ENCODE measurements at regions of chr9 and their contacts with region 1.

Region 1: GRCh38 chr9:104743376-104743985 is 4.0 kb upstream of the NIPSNAP3A start:
- DNase-seq: peak; percentile 75
- H3K4me3 ChIP-seq: no peak overlapping the region
- H3K27ac ChIP-seq: no peak overlapping the region
- H3K4me1 ChIP-seq: no peaks in the 10 kb centered on the region
- H3K27me3 ChIP-seq: no peaks in the 10 kb centered on the region
- CTCF ChIP-seq: peak; percentile 79

Region 2: GRCh38 chr9:104494808-104495207 is 248.7 kb before region 1 on chr9:
- CTCF ChIA-PET with region 1: no interaction called
- POLR2A ChIA-PET with region 1: no interaction called
- intact Hi-C with region 1: loop called (anchors 5 kb)
- DNase-seq: peak; percentile 34
- H3K4me3 ChIP-seq: no peak overlapping the region
- H3K27ac ChIP-seq: no peak overlapping the region
- H3K4me1 ChIP-seq: no peaks in the 10 kb centered on the region
- H3K27me3 ChIP-seq: no peaks in the 10 kb centered on the region
- CTCF ChIP-seq: peak; percentile 44; the same call in 1 of the 2 replicates